Transverse colon (tissue), 4 donors: ENCODE measurements at regions of chr1 and their contacts with region 1.

Region 1: DNA sequence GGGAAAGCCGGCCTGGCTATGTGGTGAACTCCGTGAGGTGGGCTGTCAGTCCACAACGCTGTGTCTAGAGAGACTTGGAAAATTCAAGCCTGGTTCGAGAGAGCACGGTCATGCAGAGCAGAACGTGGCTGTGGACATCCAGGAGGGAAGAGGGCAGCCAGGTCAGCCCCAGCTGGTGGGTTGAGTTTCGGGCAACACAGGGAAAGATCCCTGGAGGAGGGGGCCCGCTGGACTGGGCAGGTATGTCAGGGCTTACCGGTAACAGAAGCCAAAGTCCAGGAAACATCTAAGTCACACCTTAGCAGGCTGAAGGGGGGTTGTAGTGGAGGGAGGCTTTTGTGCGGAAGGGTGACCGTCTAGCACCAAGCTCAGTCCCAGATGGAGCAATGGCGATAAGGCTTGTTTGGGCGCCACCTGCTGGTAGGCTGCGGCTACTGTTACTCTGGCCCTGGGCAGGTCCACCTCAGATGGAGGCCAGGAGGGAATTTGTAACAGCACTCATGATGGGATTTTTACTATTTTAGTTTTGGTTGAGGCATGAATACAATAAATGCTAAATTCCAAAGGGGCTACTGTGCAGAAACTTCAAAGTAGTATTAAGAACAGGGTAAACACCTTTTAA is 143.3 kb upstream of the ZNF644 start:
- DNase-seq: peak; percentile 86
- H3K4me3 ChIP-seq: no peak overlapping the region
- H3K27ac ChIP-seq: no peak overlapping the region
- H3K4me1 ChIP-seq: no peaks in the 10 kb centered on the region
- H3K27me3 ChIP-seq: no peaks in the 10 kb centered on the region
- CTCF ChIP-seq: peak; percentile 82 to 96 (median 92)
- EP300 ChIP-seq: no peak
- POLR2A ChIP-seq: no peak

Region 2: GRCh38 chr1:90989990-90990389 is 175.2 kb before region 1 on chr1:
- in situ Hi-C with region 1: loop called in 1 of 4 experiments (anchors 25 kb)
- intact Hi-C with region 1: no loop called
- DNase-seq: no peak
- H3K4me3 ChIP-seq: no peak overlapping the region
- H3K27ac ChIP-seq: no peak overlapping the region
- H3K4me1 ChIP-seq: peaks cover 0 to 25% (median 8%) of the 10 kb centered on the region in 4 donors
- H3K27me3 ChIP-seq: no peaks in the 10 kb centered on the region
- CTCF ChIP-seq: no peak
- EP300 ChIP-seq: no peak
- POLR2A ChIP-seq: no peak